Heart right ventricle (tissue), 16 donors: ENCODE measurements at regions of chr2 and their contacts with region 1.

Region 1: GRCh38 chr2:196068271-196069209 is at the start of gene DNAH7:
- DNase-seq: peak; percentile 89 to 91
- ATAC-seq: peak; percentile 97 to 99 (median 98)
- H3K4me3 ChIP-seq: peak within 1 kb of the TSS; percentile 51 to 92 (median 78)
- H3K27ac ChIP-seq: peak within 1 kb of the TSS in 8 of 10 donors; percentile 8 to 76 (median 50)
- H3K4me1 ChIP-seq: peaks cover 0 to 12% (median 7%) of the 10 kb centered on the region in 9 donors
- H3K27me3 ChIP-seq: no peaks in the 10 kb centered on the region
- CTCF ChIP-seq: peak in 6 of 9 donors; percentile 17 to 96 (median 90)
- total RNA-seq, gene DNAH7: 0.10 to 0.74 (median 0.22) TPM in 9 of 10 donors, not detected in the other

Region 2: DNA sequence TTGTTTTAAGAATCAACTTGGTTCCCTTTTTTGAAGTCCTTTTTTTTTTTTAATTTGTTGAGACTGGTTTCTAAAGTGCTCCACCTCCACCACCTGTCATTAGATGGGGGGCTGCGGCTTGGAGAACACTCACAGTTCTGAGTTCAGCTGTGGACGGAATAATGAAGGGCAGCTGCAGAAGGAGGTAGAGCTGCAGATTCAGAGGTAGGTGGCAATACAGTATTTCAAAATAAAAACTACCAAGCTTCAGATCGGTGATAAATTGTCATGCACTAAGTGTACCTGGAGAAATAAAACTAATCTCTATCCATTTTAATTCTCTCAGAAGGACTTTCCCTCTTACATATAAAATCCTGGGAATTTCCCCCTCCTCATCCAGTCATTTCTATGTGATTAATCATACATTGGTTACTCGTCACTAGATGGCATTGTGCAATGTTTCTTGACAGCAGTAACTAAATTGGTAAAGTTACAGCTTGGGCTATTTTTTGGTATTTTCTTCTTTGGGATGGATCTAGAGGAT is 492.6 kb before region 1 on chr2:
- intact Hi-C with region 1: loop called in 2 of 10 experiments (anchors 5 to 10 kb)
- DNase-seq: no peak
- ATAC-seq: peak in 4 of 8 donors; percentile 31 to 70 (median 46)
- H3K4me3 ChIP-seq: no peak overlapping the region
- H3K27ac ChIP-seq: no peak overlapping the region
- H3K4me1 ChIP-seq: peaks cover 0 to 41% (median 0%) of the 10 kb centered on the region in 9 donors
- H3K27me3 ChIP-seq: no peaks in the 10 kb centered on the region
- CTCF ChIP-seq: peak; percentile 7 to 60 (median 45)

Region 3: DNA sequence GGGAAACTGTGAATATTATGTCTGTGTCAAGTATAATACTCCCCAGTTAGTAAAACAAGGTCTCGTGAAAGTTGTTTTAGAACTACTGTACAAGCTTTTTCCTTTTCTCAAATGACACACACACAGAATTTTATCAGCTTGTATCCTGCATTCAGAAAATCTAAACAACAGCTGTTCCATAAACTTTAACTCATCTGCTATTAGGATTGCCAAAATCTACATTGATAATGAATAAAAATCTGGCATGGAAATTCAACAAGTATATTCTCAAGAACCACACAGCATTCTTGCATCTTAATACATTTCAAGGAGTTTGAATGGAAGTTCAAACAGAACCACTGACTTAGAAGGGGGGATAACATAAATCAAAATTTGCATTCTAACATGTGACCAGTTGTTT is 260.4 kb before region 1 on chr2:
- intact Hi-C with region 1: no loop called
- DNase-seq: no peak
- ATAC-seq: no peak
- H3K4me3 ChIP-seq: no peak overlapping the region
- H3K27ac ChIP-seq: no peak overlapping the region
- H3K4me1 ChIP-seq: no peaks in the 10 kb centered on the region
- H3K27me3 ChIP-seq: no peaks in the 10 kb centered on the region
- CTCF ChIP-seq: no peak

Region 4: DNA sequence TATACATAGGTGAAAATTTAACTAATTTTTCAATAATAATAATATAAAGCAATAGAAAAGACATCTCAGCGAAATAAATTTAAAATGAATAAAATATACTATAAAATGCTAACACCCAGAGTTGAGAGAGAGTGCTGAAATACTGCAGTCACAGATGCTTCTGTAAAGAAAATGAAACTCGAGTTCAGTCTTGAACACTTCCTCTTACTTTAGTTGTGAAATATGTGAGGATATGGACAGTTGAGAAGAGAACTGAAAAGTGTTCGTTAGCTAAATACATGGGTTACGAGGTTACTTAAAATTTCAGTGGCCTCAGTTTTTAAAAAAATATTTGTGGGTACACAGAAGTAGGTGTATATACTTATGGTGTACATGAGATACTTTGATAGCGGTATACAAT is 106.7 kb before region 1 on chr2:
- intact Hi-C with region 1: no loop called
- DNase-seq: no peak
- ATAC-seq: no peak
- H3K4me3 ChIP-seq: no peak overlapping the region
- H3K27ac ChIP-seq: no peak overlapping the region
- H3K4me1 ChIP-seq: no peaks in the 10 kb centered on the region
- H3K27me3 ChIP-seq: no peaks in the 10 kb centered on the region
- CTCF ChIP-seq: no peak